Caco-2 (cell line): ENCODE measurements at regions of chr3 and their contacts with region 1.

Region 1: DNA sequence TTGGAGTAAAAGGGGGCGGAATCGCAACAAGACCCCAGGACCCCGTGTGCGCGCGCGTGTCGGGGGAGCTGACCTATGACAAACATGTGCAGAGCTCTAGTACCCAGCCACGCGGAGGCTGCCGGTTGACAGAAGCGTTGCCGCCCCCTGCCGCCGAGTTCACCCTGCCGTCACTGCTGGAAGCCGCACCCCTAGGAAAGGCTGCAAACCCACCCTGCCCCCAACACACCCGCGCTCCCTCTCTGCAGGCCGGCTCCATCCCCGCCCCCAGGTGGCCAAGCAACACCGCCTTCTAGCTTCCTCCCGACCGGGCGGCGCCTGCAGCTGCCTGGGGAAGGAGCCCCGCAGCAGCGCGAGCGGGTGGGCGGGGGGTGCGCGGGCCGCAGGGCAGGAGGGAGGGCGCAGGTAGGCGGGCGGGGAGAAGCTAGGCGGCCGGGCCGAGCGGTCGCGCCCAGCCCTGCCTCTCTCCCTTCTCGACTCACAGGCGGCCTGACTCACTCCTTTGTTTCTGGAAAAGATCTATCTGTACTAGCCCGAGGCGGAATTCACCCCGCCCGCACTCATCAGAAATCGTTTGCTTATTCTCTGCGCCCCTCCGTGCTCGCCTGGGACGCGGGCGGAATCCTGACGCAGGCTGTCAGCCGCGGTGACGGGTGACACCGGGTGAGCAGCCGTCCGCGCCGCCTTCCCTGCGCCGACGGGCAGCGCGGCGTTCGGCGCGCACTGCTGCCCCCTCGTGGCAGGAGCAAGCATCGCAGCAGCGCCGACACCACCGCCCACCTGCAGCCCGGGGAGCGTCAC is 160.8 kb downstream of the GAP43 start:
- DNase-seq: peak; percentile 94
- H3K4me3 ChIP-seq: peak overlapping the region; percentile 57
- H3K4me3 Mint-ChIP-seq: peak overlapping the region; percentile 67
- H3K27ac Mint-ChIP-seq: peak overlapping the region; percentile 74
- H3K4me1 ChIP-seq: no peaks in the 10 kb centered on the region
- H3K4me1 Mint-ChIP-seq: peaks cover 12% of the 10 kb centered on the region
- H3K27me3 ChIP-seq: no peaks in the 10 kb centered on the region
- H3K27me3 Mint-ChIP-seq: peaks cover 7% of the 10 kb centered on the region
- CTCF ChIP-seq: peak; percentile 86 to 90

Region 2: DNA sequence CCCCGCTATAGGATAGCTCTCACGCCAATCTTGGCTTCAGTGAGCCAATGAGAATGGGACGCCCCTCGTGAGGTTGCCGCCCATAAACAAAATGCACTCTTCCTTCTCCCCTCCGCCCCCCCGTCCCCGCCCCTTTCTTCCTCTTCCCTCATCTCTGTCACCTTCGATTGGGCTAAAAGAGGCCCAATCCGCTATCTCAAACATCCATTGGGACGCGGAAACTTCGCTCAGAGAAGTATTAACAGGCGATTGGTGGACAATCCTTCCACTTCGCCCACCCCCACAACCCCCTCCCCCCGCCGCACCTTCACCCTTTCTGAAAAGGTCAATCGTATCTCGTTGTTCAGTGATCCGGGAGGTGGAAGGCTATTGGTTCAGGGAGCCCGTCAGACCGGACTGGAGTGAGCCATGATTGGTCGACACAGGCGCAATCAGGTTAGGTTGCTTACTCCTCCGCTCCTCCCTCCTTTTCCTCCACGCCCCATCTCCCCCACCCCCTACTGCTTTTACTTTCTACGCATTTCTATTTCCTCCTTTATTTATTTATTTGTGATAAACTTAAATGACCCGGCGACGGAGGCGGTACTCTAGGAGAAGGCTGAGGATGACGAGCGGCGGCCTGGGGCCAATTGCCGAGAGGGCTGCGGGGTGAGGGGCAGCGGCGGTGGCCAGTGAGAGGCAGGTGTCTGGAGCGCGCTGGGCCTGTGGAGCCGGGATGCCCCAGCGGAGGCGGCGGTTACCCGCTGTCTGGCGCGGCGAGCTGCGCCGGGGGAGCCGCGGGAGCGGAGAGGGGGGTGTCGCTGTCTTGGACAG is 636.6 kb before region 1 on chr3:
- CTCF ChIA-PET with region 1: no interaction called
- POLR2A ChIA-PET with region 1: no interaction called
- intact Hi-C with region 1: loop called (anchors 2 kb)
- DNase-seq: peak; percentile 95 to 98
- H3K4me3 ChIP-seq: peak overlapping the region; percentile 82
- H3K4me3 Mint-ChIP-seq: peak overlapping the region; percentile 93
- H3K27ac Mint-ChIP-seq: peak overlapping the region; percentile 89
- H3K4me1 ChIP-seq: no peaks in the 10 kb centered on the region
- H3K4me1 Mint-ChIP-seq: no peaks in the 10 kb centered on the region
- H3K27me3 ChIP-seq: no peaks in the 10 kb centered on the region
- H3K27me3 Mint-ChIP-seq: peaks cover 8% of the 10 kb centered on the region
- CTCF ChIP-seq: no peak

Region 3: GRCh38 chr3:115217678-115218451 is 566.3 kb before region 1 on chr3:
- CTCF ChIA-PET with region 1: interaction called, 7 read pairs
- POLR2A ChIA-PET with region 1: no interaction called
- intact Hi-C with region 1: loop called (anchors 1 kb)
- DNase-seq: peak in 1 of 2 experiments; percentile 38
- H3K4me3 ChIP-seq: no peak overlapping the region
- H3K4me3 Mint-ChIP-seq: no peak overlapping the region
- H3K27ac Mint-ChIP-seq: no peak overlapping the region
- H3K4me1 ChIP-seq: no peaks in the 10 kb centered on the region
- H3K4me1 Mint-ChIP-seq: no peaks in the 10 kb centered on the region
- H3K27me3 ChIP-seq: no peaks in the 10 kb centered on the region
- H3K27me3 Mint-ChIP-seq: peaks cover 10% of the 10 kb centered on the region
- CTCF ChIP-seq: peak in 1 of 2 experiments; percentile 44

Region 4: DNA sequence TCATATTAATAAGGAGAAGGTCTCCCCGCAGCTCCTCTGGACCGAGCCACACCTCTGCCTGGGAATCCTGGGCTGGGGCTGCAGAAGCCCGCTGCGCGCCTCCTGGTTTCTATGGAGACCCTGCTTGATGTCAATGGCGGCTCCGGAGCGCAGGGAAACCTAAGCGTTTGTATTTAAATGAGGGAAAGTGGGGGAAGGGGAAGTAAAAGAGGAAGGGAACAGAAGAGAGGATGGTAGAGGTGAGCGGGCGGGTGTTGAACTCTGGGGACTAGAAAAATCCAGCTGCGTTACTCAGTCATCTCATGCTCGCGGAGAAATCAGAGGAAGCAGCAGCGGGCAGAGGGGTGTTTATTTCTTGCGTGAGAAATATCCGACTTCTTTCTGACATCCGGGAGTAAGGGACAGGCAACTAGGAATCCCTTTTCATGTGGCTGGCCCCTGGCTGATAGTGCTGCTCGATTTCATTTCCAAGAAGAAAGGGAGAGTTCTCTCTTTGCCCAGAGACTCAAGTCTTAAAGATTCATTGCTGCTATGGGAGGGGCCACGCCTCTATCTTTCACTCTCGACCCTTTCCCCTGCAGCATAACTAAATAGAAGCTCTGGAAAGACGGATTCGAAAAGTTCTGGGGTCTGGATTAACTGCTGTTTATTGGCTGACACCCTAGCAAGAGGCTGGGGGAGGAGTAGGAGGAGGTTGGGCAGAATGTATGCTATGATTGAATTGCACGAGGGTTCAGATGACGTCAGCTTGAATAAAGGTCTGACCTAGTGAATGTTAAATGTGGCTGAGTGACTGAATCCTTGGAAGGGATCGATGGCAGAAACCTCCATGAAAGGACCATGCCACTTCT is 271.3 kb before region 1 on chr3:
- CTCF ChIA-PET with region 1: no interaction called
- POLR2A ChIA-PET with region 1: no interaction called
- intact Hi-C with region 1: no loop called
- DNase-seq: no peak
- H3K4me3 ChIP-seq: no peak overlapping the region
- H3K4me3 Mint-ChIP-seq: peak overlapping the region; percentile 62
- H3K27ac Mint-ChIP-seq: no peak overlapping the region
- H3K4me1 ChIP-seq: no peaks in the 10 kb centered on the region
- H3K4me1 Mint-ChIP-seq: no peaks in the 10 kb centered on the region
- H3K27me3 ChIP-seq: no peaks in the 10 kb centered on the region
- H3K27me3 Mint-ChIP-seq: peaks cover 25% of the 10 kb centered on the region
- CTCF ChIP-seq: no peak

Region 5: GRCh38 chr3:115706311-115706829 is 77.8 kb before region 1 on chr3:
- CTCF ChIA-PET with region 1: interaction called, 5 read pairs
- POLR2A ChIA-PET with region 1: no interaction called
- intact Hi-C with region 1: loop called (anchors 1 kb)
- DNase-seq: peak in 1 of 2 experiments; percentile 47
- H3K4me3 ChIP-seq: no peak overlapping the region
- H3K4me3 Mint-ChIP-seq: peak overlapping the region; percentile 49
- H3K27ac Mint-ChIP-seq: no peak overlapping the region
- H3K4me1 ChIP-seq: peaks cover 28% of the 10 kb centered on the region
- H3K4me1 Mint-ChIP-seq: no peaks in the 10 kb centered on the region
- H3K27me3 ChIP-seq: no peaks in the 10 kb centered on the region
- H3K27me3 Mint-ChIP-seq: no peaks in the 10 kb centered on the region
- CTCF ChIP-seq: no peak

Region 6: GRCh38 chr3:115814778-115815380 is 30.7 kb after region 1 on chr3:
- CTCF ChIA-PET with region 1: interaction called, 14 read pairs
- POLR2A ChIA-PET with region 1: no interaction called
- intact Hi-C with region 1: loop called (anchors 1 kb)
- DNase-seq: peak; percentile 63 to 74
- H3K4me3 ChIP-seq: no peak overlapping the region
- H3K4me3 Mint-ChIP-seq: no peak overlapping the region
- H3K27ac Mint-ChIP-seq: no peak overlapping the region
- H3K4me1 ChIP-seq: no peaks in the 10 kb centered on the region
- H3K4me1 Mint-ChIP-seq: no peaks in the 10 kb centered on the region
- H3K27me3 ChIP-seq: no peaks in the 10 kb centered on the region
- H3K27me3 Mint-ChIP-seq: peaks cover 7% of the 10 kb centered on the region
- CTCF ChIP-seq: peak; percentile 82 to 83

Region 7: DNA sequence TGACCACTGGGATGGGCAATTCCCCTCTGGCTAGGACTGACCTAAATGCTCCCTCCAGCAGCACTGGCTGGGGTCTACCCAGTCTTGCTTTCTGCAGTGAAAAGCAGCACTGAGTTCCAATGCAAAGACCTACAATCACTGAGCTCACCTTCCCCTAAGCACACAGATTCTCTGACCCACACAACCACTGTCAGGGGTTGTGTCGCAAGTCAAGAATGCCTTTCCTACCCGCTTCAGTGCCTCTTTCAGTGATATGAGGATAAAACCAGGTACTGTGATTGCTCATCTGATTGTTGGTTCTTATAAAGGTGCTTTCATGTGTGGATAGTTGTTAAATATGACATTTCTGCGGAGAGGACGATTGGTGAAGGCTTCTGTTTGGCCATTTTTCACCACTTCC is 184.7 kb after region 1 on chr3:
- CTCF ChIA-PET with region 1: no interaction called
- POLR2A ChIA-PET with region 1: no interaction called
- intact Hi-C with region 1: no loop called
- DNase-seq: no peak
- H3K4me3 ChIP-seq: no peak overlapping the region
- H3K4me3 Mint-ChIP-seq: no peak overlapping the region
- H3K27ac Mint-ChIP-seq: no peak overlapping the region
- H3K4me1 ChIP-seq: no peaks in the 10 kb centered on the region
- H3K4me1 Mint-ChIP-seq: no peaks in the 10 kb centered on the region
- H3K27me3 ChIP-seq: no peaks in the 10 kb centered on the region
- H3K27me3 Mint-ChIP-seq: peaks cover 4% of the 10 kb centered on the region
- CTCF ChIP-seq: no peak